Activated CD4-positive, alpha-beta memory T cell treated with anti-CD3 and anti-CD28 coated beads, Interleukin-2, amount 10 ng/mL, durations not matched to agents 7 days and 5 days (primary cell): ENCODE measurements at regions of chr6 and their contacts with region 1.

Region 1: DNA sequence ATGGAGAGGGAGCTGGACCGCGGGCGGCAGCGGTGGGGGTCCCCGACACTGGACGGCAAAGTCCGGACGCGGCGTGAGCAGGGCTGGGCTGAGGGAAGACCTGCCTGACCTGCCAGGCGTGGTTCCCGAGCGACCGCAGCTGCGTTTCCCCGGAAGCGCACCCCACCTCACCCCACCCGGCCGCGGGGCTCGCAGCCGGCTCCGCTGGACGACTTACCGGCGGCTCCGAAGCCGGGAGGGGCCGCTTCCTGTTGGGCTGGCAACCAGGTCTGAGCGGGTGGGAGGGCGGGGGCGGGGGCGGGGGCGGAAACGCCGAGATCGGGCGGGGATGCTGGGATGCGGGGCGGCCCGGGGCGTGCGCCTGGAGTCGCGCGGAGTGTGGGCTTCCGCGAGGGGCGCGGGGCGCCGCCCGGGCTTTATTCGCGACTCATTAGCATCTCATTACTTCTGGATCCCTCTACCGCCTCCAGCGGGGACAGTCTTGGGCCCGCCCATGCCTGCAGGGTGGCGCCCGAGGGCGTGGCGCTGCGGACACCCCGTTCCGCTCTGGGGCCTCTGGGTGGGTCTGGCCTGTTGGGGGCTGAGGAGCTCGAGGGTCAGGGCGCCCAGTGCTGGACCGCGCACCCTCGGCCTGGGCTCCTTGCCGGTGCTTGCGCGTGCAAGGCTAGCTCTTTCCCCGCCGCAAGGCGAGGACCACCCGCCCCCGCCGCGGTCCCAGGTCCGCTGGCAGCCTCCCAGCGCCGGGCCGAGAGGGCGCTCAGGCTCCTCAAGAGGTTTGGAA is at the start of gene MICAL1:
- DNase-seq: peak; percentile 84
- H3K4me3 Mint-ChIP-seq: peak within 1 kb of the TSS; percentile 97
- H3K27ac Mint-ChIP-seq: peak within 1 kb of the TSS; percentile 98
- H3K4me1 Mint-ChIP-seq: peaks cover 78% of the 10 kb centered on the region
- H3K27me3 Mint-ChIP-seq: no peaks in the 10 kb centered on the region
- total RNA-seq, gene MICAL1: 125 to 128 TPM

Region 2: GRCh38 chr6:109255946-109256640 is 199.6 kb before region 1 on chr6:
- CTCF ChIA-PET with region 1: no interaction called
- POLR2A ChIA-PET with region 1: no interaction called
- DNase-seq: no peak
- H3K4me3 Mint-ChIP-seq: no peak overlapping the region
- H3K27ac Mint-ChIP-seq: no peak overlapping the region
- H3K4me1 Mint-ChIP-seq: no peaks in the 10 kb centered on the region
- H3K27me3 Mint-ChIP-seq: peaks cover 4% of the 10 kb centered on the region

Region 3: DNA sequence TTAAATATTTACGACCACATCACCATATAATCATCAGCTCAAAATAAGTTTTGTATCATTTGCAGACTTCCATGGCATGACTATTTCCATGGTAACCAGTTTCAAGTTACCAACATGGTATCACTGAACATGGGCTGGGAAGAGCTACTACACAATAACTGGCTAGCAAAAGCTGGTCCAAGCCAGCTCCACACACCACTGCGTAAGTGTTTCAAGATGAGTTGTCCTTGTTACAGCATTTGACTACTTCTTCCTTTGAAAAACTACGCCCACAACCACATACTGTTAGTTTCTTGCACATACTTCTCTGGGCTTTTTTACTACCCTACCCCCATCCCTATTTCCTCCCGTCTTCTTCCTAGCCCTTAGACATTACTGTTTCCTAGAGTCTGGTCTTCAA is 81.9 kb before region 1 on chr6:
- CTCF ChIA-PET with region 1: interaction called, 3 read pairs
- POLR2A ChIA-PET with region 1: interaction called, 14 read pairs
- DNase-seq: peak; percentile 64
- H3K4me3 Mint-ChIP-seq: peak overlapping the region; percentile 54
- H3K27ac Mint-ChIP-seq: peak overlapping the region; percentile 89
- H3K4me1 Mint-ChIP-seq: peaks cover 78% of the 10 kb centered on the region
- H3K27me3 Mint-ChIP-seq: no peaks in the 10 kb centered on the region

Region 4: DNA sequence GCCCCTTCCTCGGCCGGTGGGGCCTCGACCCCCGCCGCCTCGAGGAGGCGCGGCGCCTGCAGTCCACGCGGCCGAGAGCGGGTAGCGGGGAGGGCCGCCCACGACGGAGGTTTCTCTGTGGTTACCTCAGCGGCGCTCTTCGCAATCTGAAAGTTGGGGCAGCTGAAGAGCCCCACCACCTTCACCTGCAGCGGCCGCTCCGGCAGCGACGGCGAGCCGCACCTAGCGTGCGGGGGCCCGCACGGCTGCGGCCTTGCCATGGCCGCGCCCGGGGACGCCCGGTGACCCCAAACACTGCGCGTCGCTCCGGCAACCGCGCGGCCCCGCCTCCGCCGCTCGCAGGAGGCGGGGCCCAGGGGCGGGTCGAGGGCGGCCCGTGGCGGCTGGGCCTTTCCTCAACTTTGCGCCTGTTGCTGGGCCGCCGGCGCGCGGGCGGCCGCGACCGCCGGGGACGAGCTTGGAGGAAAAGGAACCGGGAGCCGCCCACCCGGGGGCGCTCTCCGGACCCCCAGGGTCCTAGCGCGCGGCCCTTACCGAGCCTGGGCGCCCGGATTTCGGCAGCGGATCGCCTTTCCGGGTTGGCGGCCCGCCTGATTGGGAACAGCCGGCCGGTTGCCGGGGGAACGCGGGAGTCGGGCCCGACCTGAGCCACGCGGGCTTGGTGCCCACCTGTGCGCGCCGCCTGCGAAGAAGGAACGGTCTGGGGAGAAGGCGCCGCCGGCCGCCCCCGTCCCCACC is 15.2 kb before region 1 on chr6 and contains the starts of genes PPIL6 and SMPD2:
- CTCF ChIA-PET with region 1: interaction called, 36 read pairs
- POLR2A ChIA-PET with region 1: interaction called, 243 read pairs
- DNase-seq: peak; percentile 81
- H3K4me3 Mint-ChIP-seq: peak within 1 kb of the TSS; percentile 90
- H3K27ac Mint-ChIP-seq: peak within 1 kb of the TSS; percentile 75
- H3K4me1 Mint-ChIP-seq: peaks cover 32% of the 10 kb centered on the region
- H3K27me3 Mint-ChIP-seq: peaks cover 4% of the 10 kb centered on the region
- total RNA-seq, gene PPIL6: not detected
- total RNA-seq, gene SMPD2: 15.9 to 16.9 TPM

Region 5: DNA sequence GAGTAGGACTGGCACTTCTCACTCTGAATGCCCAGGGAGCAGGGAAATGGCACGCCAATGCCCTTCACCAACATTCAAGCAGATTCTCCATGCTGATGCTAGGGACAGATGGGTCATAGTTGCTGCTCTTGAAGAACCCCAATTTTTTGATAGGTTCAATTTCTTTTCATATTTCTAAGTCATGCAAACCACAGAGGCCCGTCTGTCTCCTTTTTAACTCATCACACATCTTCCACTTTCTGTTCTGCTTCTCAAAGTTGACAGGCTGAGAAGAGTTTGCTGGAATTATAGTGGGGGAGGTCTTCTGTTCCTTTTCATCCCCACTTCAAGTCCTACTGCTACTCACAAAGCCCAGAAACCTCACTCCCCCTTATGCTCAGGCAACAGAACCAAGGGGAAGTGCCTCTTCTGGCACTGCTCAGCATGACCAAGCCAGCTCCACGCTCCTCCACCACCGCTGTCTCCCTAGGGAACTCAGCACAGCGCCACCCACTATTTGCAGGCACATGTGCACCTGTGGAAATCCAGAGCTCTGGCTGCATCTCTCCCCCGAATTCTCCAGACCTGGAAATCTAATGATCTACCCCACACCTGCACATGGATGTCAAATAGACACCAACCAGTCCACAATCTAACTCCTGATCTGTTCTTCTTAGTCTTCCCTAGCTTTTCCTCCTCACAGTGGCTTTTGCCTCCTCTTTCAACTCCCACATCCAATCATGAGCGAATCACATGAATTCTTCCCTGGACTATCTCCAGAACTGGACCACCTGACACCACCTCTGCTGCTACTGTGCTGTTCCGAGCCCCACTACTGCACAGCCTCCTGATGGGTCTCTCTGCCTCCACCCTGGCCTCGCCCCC is 16.7 kb after region 1 on chr6:
- CTCF ChIA-PET with region 1: interaction called, 6 read pairs
- POLR2A ChIA-PET with region 1: interaction called, 21 read pairs
- DNase-seq: no peak
- H3K4me3 Mint-ChIP-seq: no peak overlapping the region
- H3K27ac Mint-ChIP-seq: peak overlapping the region; percentile 41
- H3K4me1 Mint-ChIP-seq: peaks cover 67% of the 10 kb centered on the region
- H3K27me3 Mint-ChIP-seq: no peaks in the 10 kb centered on the region

Region 6: GRCh38 chr6:109482905-109483735 is 27.4 kb after region 1 on chr6 and contains the start of gene ZBTB24:
- CTCF ChIA-PET with region 1: interaction called, 13 read pairs
- POLR2A ChIA-PET with region 1: interaction called, 139 read pairs
- DNase-seq: peak; percentile 91
- H3K4me3 Mint-ChIP-seq: peak within 1 kb of the TSS; percentile 98
- H3K27ac Mint-ChIP-seq: peak within 1 kb of the TSS; percentile 88
- H3K4me1 Mint-ChIP-seq: peaks cover 46% of the 10 kb centered on the region
- H3K27me3 Mint-ChIP-seq: peaks cover 2% of the 10 kb centered on the region
- total RNA-seq, gene ZBTB24: 16.5 to 17.5 TPM

Region 7: GRCh38 chr6:109491207-109491938 is 35.7 kb after region 1 on chr6:
- CTCF ChIA-PET with region 1: interaction called, 8 read pairs
- POLR2A ChIA-PET with region 1: interaction called, 45 read pairs
- DNase-seq: peak; percentile 56
- H3K4me3 Mint-ChIP-seq: peak overlapping the region; percentile 41
- H3K27ac Mint-ChIP-seq: peak overlapping the region; percentile 92
- H3K4me1 Mint-ChIP-seq: peaks cover 35% of the 10 kb centered on the region
- H3K27me3 Mint-ChIP-seq: peaks cover 5% of the 10 kb centered on the region